ENCODE measurements at regions of chr12 and their contacts with region 1.

Region 1: GRCh38 chr12:80269803-80270552 is 170.6 kb downstream of the OTOGL start:
- DNase-seq: peak in 2 of 9 experiments; percentile 30 to 40
- ATAC-seq: no peak
- H3K4me3 ChIP-seq: no peak overlapping the region
- H3K4me3 Mint-ChIP-seq: no peak overlapping the region
- H3K27ac ChIP-seq: no peak overlapping the region
- H3K27ac Mint-ChIP-seq: no peak overlapping the region
- H3K4me1 ChIP-seq: no peaks in the 10 kb centered on the region
- H3K4me1 Mint-ChIP-seq: no peaks in the 10 kb centered on the region
- H3K27me3 ChIP-seq: no peaks in the 10 kb centered on the region
- H3K27me3 Mint-ChIP-seq: peaks cover 7% of the 10 kb centered on the region
- CTCF ChIP-seq: peak; percentile 53

Region 2: GRCh38 chr12:79547735-79548609 is 722.0 kb before region 1 on chr12:
- CTCF ChIA-PET with region 1: interaction called, 3 read pairs
- POLR2A ChIA-PET with region 1: no interaction called
- intact Hi-C with region 1: loop called in 1 of 2 experiments (anchors 5 kb)
- DNase-seq: peak in 2 of 9 experiments; percentile 7 to 28
- ATAC-seq: no peak
- H3K4me3 ChIP-seq: no peak overlapping the region
- H3K4me3 Mint-ChIP-seq: no peak overlapping the region
- H3K27ac ChIP-seq: no peak overlapping the region
- H3K27ac Mint-ChIP-seq: no peak overlapping the region
- H3K4me1 ChIP-seq: no peaks in the 10 kb centered on the region
- H3K4me1 Mint-ChIP-seq: no peaks in the 10 kb centered on the region
- H3K27me3 ChIP-seq: no peaks in the 10 kb centered on the region
- H3K27me3 Mint-ChIP-seq: no peaks in the 10 kb centered on the region
- CTCF ChIP-seq: peak; percentile 20

Region 3: GRCh38 chr12:79555028-79555930 is 714.7 kb before region 1 on chr12:
- CTCF ChIA-PET with region 1: no interaction called
- POLR2A ChIA-PET with region 1: no interaction called
- intact Hi-C with region 1: loop called (anchors 5 kb)
- DNase-seq: peak in 1 of 9 experiments; percentile 20
- ATAC-seq: no peak
- H3K4me3 ChIP-seq: no peak overlapping the region
- H3K4me3 Mint-ChIP-seq: no peak overlapping the region
- H3K27ac ChIP-seq: no peak overlapping the region
- H3K27ac Mint-ChIP-seq: no peak overlapping the region
- H3K4me1 ChIP-seq: no peaks in the 10 kb centered on the region
- H3K4me1 Mint-ChIP-seq: no peaks in the 10 kb centered on the region
- H3K27me3 ChIP-seq: no peaks in the 10 kb centered on the region
- H3K27me3 Mint-ChIP-seq: no peaks in the 10 kb centered on the region
- CTCF ChIP-seq: no peak

Region 4: GRCh38 chr12:80053048-80053790 is 216.8 kb before region 1 on chr12:
- CTCF ChIA-PET with region 1: no interaction called
- POLR2A ChIA-PET with region 1: no interaction called
- intact Hi-C with region 1: loop called (anchors 1 to 5 kb)
- DNase-seq: no peak
- ATAC-seq: no peak
- H3K4me3 ChIP-seq: no peak overlapping the region
- H3K4me3 Mint-ChIP-seq: no peak overlapping the region
- H3K27ac ChIP-seq: no peak overlapping the region
- H3K27ac Mint-ChIP-seq: no peak overlapping the region
- H3K4me1 ChIP-seq: no peaks in the 10 kb centered on the region
- H3K4me1 Mint-ChIP-seq: peaks cover 4% of the 10 kb centered on the region
- H3K27me3 ChIP-seq: no peaks in the 10 kb centered on the region
- H3K27me3 Mint-ChIP-seq: peaks cover 9% of the 10 kb centered on the region
- CTCF ChIP-seq: no peak

Region 5: GRCh38 chr12:80353257-80353656 is 83.3 kb after region 1 on chr12:
- CTCF ChIA-PET with region 1: no interaction called
- POLR2A ChIA-PET with region 1: no interaction called
- intact Hi-C with region 1: no loop called
- DNase-seq: no peak
- ATAC-seq: no peak
- H3K4me3 ChIP-seq: no peak overlapping the region
- H3K4me3 Mint-ChIP-seq: no peak overlapping the region
- H3K27ac ChIP-seq: no peak overlapping the region
- H3K27ac Mint-ChIP-seq: no peak overlapping the region
- H3K4me1 ChIP-seq: no peaks in the 10 kb centered on the region
- H3K4me1 Mint-ChIP-seq: no peaks in the 10 kb centered on the region
- H3K27me3 ChIP-seq: no peaks in the 10 kb centered on the region
- H3K27me3 Mint-ChIP-seq: no peaks in the 10 kb centered on the region
- CTCF ChIP-seq: no peak

Region 6: GRCh38 chr12:80721326-80721725 is 451.3 kb after region 1 on chr12:
- CTCF ChIA-PET with region 1: no interaction called
- POLR2A ChIA-PET with region 1: no interaction called
- intact Hi-C with region 1: no loop called
- DNase-seq: no peak
- ATAC-seq: no peak
- H3K4me3 ChIP-seq: no peak overlapping the region
- H3K4me3 Mint-ChIP-seq: no peak overlapping the region
- H3K27ac ChIP-seq: no peak overlapping the region
- H3K27ac Mint-ChIP-seq: no peak overlapping the region
- H3K4me1 ChIP-seq: no peaks in the 10 kb centered on the region
- H3K4me1 Mint-ChIP-seq: no peaks in the 10 kb centered on the region
- H3K27me3 ChIP-seq: peaks cover 0 to 3% of the 10 kb centered on the region in 2 experiments
- H3K27me3 Mint-ChIP-seq: peaks cover 2% of the 10 kb centered on the region
- CTCF ChIP-seq: no peak